Activated CD4-positive, alpha-beta T cell treated with anti-CD3 and anti-CD28 coated beads, Interleukin-2, amount 10 ng/mL, durations not matched to agents 24 days and 14 days (primary cell): ENCODE measurements at regions of chr2 and their contacts with region 1.

Region 1: DNA sequence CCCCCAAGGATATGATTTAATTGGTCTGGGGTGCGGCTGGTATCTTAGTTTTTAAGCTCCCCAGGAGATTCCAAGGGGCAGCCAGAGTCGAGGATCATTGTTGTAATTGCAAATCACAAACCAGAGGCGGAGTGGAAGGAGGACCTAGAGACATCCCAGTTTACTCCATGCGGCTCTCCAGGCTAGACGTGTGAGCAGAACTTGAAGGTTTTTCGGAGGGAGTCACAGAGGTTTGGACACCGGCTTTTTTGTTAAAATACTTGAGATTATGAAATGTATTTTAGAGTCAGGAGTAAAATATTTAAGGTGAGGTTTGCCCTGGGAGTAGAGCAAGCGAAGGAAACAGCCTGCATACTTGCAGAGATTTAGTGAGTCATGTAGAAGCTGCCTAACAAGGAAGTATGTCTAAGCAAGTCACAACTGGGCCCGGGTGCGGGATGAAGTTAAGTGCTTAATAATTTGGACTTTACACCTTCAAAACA is 39.5 kb downstream of the TGOLN2 start:
- DNase-seq: no peak
- H3K4me3 Mint-ChIP-seq: no peak overlapping the region
- H3K27ac Mint-ChIP-seq: no peak overlapping the region
- H3K4me1 Mint-ChIP-seq: peaks cover 21% of the 10 kb centered on the region
- H3K27me3 Mint-ChIP-seq: no peaks in the 10 kb centered on the region

Region 2: GRCh38 chr2:85066874-85067351 is 221.4 kb before region 1 on chr2:
- intact Hi-C with region 1: loop called (anchors 1 kb)
- DNase-seq: peak; percentile 77
- H3K4me3 Mint-ChIP-seq: no peak overlapping the region
- H3K27ac Mint-ChIP-seq: no peak overlapping the region
- H3K4me1 Mint-ChIP-seq: peaks cover 2% of the 10 kb centered on the region
- H3K27me3 Mint-ChIP-seq: peaks cover 29% of the 10 kb centered on the region

Region 3: GRCh38 chr2:85132834-85133637 is 155.2 kb before region 1 on chr2 and contains the start of gene TCF7L1:
- intact Hi-C with region 1: loop called (anchors 5 kb)
- DNase-seq: peak; percentile 80
- H3K4me3 Mint-ChIP-seq: peak within 1 kb of the TSS; percentile 78
- H3K27ac Mint-ChIP-seq: no peak within 1 kb of the TSS
- H3K4me1 Mint-ChIP-seq: peaks cover 9% of the 10 kb centered on the region
- H3K27me3 Mint-ChIP-seq: peaks cover 66% of the 10 kb centered on the region
- total RNA-seq, gene TCF7L1: 0.19 TPM in 1 of 2 replicates, not detected in the other

Region 4: DNA sequence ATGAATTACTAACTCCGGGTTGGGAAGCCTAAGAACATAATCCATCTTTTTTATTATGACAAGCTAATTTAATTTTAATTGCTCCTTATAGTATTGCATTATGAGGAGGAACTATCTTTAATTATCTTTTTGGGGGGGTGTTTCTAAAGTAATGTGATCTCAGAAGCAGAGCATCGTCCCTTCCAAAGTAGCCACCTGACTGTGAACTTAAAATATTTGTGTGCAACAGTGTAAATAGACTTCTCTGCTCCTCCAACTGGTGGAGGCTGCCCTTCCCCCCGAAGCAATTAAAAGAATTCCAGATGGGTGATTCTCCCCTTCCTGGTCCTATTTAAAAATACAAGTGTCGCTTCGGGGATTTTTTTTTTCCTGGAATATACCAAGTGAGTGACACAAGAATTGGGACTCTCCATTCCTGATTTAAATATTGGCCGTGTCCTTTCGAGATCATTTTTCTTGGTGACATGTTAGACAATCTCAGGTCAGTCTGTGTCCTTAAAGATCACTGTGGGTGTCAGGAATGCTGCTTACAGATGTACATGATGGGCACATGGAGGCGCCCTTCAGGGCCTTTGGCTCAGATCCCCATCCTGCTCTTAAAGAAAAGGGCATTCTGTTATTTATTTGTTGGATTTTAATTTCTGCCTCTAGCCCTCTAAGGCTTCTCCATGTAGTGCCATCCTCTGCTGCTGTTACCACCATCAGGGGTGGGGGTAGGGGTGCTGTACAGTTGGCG is 99.3 kb before region 1 on chr2:
- intact Hi-C with region 1: loop called (anchors 5 kb)
- DNase-seq: no peak
- H3K4me3 Mint-ChIP-seq: no peak overlapping the region
- H3K27ac Mint-ChIP-seq: no peak overlapping the region
- H3K4me1 Mint-ChIP-seq: peaks cover 3% of the 10 kb centered on the region
- H3K27me3 Mint-ChIP-seq: peaks cover 16% of the 10 kb centered on the region

Region 5: GRCh38 chr2:85266146-85267041 is 21.9 kb before region 1 on chr2:
- intact Hi-C with region 1: loop called (anchors 1 kb)
- DNase-seq: peak; percentile 91
- H3K4me3 Mint-ChIP-seq: no peak overlapping the region
- H3K27ac Mint-ChIP-seq: no peak overlapping the region
- H3K4me1 Mint-ChIP-seq: peaks cover 2% of the 10 kb centered on the region
- H3K27me3 Mint-ChIP-seq: peaks cover 29% of the 10 kb centered on the region